ENCODE measurements at regions of chr13 and their contacts with region 1.

Region 1: DNA sequence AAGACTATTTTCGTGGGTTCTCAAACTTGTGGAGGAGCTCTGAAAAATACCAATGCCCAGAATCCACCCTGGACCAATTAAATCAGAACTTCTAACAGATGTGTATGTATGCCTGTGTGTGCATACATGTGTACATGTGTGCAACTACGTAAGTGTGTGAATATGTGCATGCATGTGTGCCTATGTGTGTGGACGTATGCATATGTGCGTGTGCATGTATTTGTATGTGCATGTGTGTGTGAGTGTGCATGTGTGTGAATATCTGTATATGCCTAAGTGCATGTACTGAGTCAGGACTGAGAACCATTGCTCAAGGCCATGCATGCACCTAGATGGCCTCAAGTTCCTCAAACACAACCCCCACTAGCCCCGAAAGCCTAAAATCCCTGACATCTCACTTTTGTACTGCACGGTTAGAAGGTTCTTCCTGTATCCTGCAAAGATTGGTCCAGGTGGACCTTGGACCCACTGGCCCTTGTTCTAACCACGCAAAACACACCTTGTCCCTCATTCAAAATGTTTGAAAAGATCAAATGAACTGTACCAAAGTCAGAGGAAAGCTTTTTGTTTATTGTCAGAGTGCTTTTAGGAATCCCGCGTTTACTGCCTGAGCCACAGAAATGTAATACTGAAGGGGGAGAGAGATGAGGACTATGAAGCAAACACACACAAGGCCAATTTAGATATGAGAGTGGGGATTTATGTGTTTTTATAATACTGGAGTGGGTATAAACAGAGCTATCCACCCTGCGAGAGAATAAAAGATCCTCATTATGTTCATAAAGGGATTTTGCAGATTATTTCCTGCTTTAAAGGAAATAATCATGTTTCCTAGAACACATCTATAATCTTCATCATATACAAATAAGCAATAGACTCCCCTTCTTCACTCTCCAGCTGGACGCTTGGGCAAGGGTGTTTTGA is 39.1 kb downstream of the LATS2 start:
- DNase-seq: peak; percentile 30 to 46 (median 31)
- H3K4me3 ChIP-seq: no peak overlapping the region
- H3K4me3 Mint-ChIP-seq: no peak overlapping the region
- H3K27ac ChIP-seq: peak overlapping the region in 1 of 2 donors; percentile 46
- H3K27ac Mint-ChIP-seq: peak overlapping the region in 5 of 7 donors; percentile 7 to 76 (median 46)
- H3K4me1 ChIP-seq: peaks cover 22 to 30% of the 10 kb centered on the region in 2 donors
- H3K4me1 Mint-ChIP-seq: peaks cover 37% of the 10 kb centered on the region
- H3K27me3 ChIP-seq: no peaks in the 10 kb centered on the region
- H3K27me3 Mint-ChIP-seq: peaks cover 0 to 1% (median 0%) of the 10 kb centered on the region in 3 donors
- CTCF ChIP-seq: no peak

Region 2: GRCh38 chr13:21060987-21061763 is 38.9 kb after region 1 on chr13 and contains the start of gene LATS2:
- intact Hi-C with region 1: loop called in 1 of 2 experiments (anchors 5 kb)
- DNase-seq: peak; percentile 89 to 95 (median 91)
- H3K4me3 ChIP-seq: peak within 1 kb of the TSS; percentile 58 to 95 (median 93)
- H3K4me3 Mint-ChIP-seq: peak within 1 kb of the TSS; percentile 84 to 90
- H3K27ac ChIP-seq: peak within 1 kb of the TSS; percentile 52 to 93
- H3K27ac Mint-ChIP-seq: peak within 1 kb of the TSS; percentile 85 to 94 (median 90)
- H3K4me1 ChIP-seq: peaks cover 41 to 53% of the 10 kb centered on the region in 2 donors
- H3K4me1 Mint-ChIP-seq: peaks cover 56% of the 10 kb centered on the region
- H3K27me3 ChIP-seq: no peaks in the 10 kb centered on the region
- H3K27me3 Mint-ChIP-seq: peaks cover 0 to 6% (median 0%) of the 10 kb centered on the region in 3 donors
- CTCF ChIP-seq: no peak
- polyA plus RNA-seq, gene LATS2: 0.96 to 11.2 (median 1.0) TPM

Measured in CD14-positive monocyte (primary cell).